Tibial artery (tissue), 4 donors: ENCODE measurements at regions of chr1 and their contacts with region 1.

Region 1: DNA sequence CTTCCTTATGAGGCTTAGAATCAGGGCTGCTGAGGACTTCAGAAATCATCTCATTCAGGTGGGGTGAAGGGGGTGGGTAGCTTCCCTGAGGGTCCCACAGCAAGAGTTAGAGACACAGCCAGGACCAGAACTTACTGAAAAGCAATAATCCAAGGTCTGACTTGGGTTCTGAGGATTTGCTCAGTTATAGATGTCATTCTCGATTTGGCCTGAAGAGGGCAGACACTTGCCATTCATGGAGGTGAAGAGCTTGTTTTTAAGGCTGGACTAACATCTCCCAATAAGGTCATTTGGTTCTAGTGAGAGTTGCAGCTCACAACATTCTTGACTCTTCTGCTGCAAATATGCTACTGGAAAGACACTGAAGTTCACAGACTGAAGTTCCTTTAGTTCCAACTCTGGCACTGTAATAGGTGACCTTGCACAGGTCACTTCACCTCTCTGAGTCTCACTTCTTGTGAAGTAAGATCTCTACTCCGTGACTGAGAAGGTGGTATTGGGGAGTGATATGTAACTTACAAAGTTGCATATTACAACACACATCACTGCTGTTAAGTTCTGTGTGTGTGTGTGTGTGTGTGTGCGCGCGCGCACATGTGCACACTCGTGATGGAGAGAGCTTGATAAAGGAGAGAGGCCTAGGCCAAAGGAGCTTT is 69.8 kb upstream of the DIRAS3 start:
- DNase-seq: peak in 1 of 2 donors; percentile 51
- H3K4me3 ChIP-seq: no peak overlapping the region
- H3K27ac ChIP-seq: peak overlapping the region in 1 of 2 donors; percentile 29
- H3K4me1 ChIP-seq: peaks cover 0 to 12% (median 6%) of the 10 kb centered on the region in 4 donors
- H3K27me3 ChIP-seq: no peaks in the 10 kb centered on the region
- CTCF ChIP-seq: peak; percentile 83 to 88

Region 2: GRCh38 chr1:67524143-67525052 is 595.9 kb before region 1 on chr1:
- intact Hi-C with region 1: loop called (anchors 10 kb)
- DNase-seq: no peak
- H3K4me3 ChIP-seq: no peak overlapping the region
- H3K27ac ChIP-seq: no peak overlapping the region
- H3K4me1 ChIP-seq: no peaks in the 10 kb centered on the region
- H3K27me3 ChIP-seq: no peaks in the 10 kb centered on the region
- CTCF ChIP-seq: no peak

Region 3: GRCh38 chr1:67713057-67713846 is 407.0 kb before region 1 on chr1:
- intact Hi-C with region 1: no loop called
- DNase-seq: no peak
- H3K4me3 ChIP-seq: no peak overlapping the region
- H3K27ac ChIP-seq: peak overlapping the region; percentile 64 to 70
- H3K4me1 ChIP-seq: peaks cover 0 to 95% (median 60%) of the 10 kb centered on the region in 4 donors
- H3K27me3 ChIP-seq: no peaks in the 10 kb centered on the region
- CTCF ChIP-seq: no peak

Region 4: GRCh38 chr1:68232354-68233148 is 112.3 kb after region 1 on chr1 and contains the start of gene WLS:
- intact Hi-C with region 1: loop called (anchors 5 kb)
- DNase-seq: peak; percentile 80 to 90
- H3K4me3 ChIP-seq: peak within 1 kb of the TSS; percentile 64 to 84
- H3K27ac ChIP-seq: peak within 1 kb of the TSS; percentile 74 to 88
- H3K4me1 ChIP-seq: peaks cover 0 to 36% (median 12%) of the 10 kb centered on the region in 4 donors
- H3K27me3 ChIP-seq: no peaks in the 10 kb centered on the region
- CTCF ChIP-seq: no peak

Region 5: GRCh38 chr1:68321084-68321685 is 200.9 kb after region 1 on chr1:
- intact Hi-C with region 1: loop called (anchors 5 kb)
- DNase-seq: peak; percentile 44 to 83
- H3K4me3 ChIP-seq: no peak overlapping the region
- H3K27ac ChIP-seq: no peak overlapping the region
- H3K4me1 ChIP-seq: peaks cover 0 to 12% (median 0%) of the 10 kb centered on the region in 4 donors
- H3K27me3 ChIP-seq: no peaks in the 10 kb centered on the region
- CTCF ChIP-seq: peak; percentile 73 to 77

Region 6: DNA sequence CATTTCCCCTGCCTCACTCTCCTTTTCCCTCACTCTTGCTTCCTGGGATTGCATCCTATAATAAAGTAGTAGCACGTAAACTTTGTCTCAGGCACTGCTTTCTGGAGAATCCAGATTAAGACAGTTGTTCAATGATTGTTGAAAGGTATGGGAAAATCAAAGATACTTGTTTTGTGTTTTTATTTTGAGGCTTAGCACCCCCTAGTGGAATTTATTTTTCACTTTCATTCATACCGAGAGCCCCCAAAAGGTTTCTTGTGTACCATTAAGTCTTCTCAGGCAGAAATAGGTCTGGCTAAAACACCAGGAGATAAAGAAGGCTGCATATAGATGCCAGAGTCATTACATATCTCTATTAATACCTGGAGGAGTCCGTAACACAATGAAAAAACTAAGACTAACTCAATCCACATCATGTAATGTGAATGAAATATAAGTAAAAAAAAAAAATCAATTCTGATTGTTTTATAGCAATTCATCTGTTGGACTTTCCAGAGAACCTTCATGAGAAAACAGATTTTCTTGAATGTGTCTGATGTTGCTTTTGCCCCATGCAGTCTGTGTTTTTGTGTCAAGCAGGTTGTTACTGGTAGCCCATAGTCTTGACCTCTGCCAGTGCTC is 226.0 kb after region 1 on chr1:
- intact Hi-C with region 1: loop called (anchors 2 kb)
- DNase-seq: no peak
- H3K4me3 ChIP-seq: no peak overlapping the region
- H3K27ac ChIP-seq: no peak overlapping the region
- H3K4me1 ChIP-seq: peaks cover 0 to 5% (median 2%) of the 10 kb centered on the region in 4 donors
- H3K27me3 ChIP-seq: no peaks in the 10 kb centered on the region
- CTCF ChIP-seq: peak; percentile 30 to 39